OCI-LY7 (cell line): ENCODE measurements at regions of chr1 and their contacts with region 1.

Region 1: GRCh38 chr1:205255941-205256780 is 28.4 kb downstream of the TMCC2 start:
- DNase-seq: peak; percentile 74
- H3K4me3 ChIP-seq: no peak overlapping the region
- H3K27ac ChIP-seq: no peak overlapping the region
- H3K4me1 ChIP-seq: peaks cover 39% of the 10 kb centered on the region
- CTCF ChIP-seq: peak; percentile 88

Region 2: GRCh38 chr1:204975570-204976235 is 280.5 kb before region 1 on chr1:
- CTCF ChIA-PET with region 1: no interaction called
- POLR2A ChIA-PET with region 1: no interaction called
- intact Hi-C with region 1: loop called (anchors 1 kb)
- DNase-seq: peak; percentile 51
- H3K4me3 ChIP-seq: no peak overlapping the region
- H3K27ac ChIP-seq: no peak overlapping the region
- H3K4me1 ChIP-seq: no peaks in the 10 kb centered on the region
- CTCF ChIP-seq: peak; percentile 84

Region 3: DNA sequence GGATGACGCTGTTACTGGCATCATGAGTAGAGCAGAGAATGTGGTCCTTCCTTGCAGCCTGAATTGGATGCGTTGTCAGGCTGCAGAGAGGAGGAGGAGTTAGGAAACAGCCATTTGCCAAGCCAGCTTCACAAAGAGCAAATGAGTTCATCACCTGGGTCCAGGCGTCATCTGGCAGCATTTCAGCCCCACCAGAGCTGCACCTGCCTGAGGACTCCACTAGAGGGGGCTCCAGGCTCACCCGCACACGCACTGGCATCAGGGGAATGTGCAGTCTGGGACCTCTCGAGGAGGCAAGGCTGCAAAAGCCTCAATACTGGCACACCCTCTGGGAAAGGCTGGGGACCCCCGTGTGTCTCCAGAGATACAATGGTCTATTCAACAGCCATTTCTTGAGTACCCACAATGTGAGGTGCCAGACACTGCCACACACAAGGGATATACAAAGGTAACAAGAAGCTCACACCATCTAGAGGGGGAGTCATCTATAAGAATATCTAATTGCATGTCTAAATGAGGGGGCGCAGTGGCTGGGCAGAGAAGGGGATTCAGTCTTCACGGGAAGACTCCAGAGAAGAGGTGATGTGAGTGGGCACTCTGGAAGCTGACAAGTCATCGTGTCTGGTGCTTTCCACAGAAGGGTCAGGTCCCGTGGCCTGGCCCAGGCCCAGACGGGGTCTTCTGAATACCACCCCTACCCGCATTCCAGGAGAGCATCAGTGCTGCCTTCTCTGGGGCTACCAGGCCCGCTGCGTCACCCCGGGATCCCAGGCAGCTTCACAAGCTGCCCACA is 266.7 kb before region 1 on chr1:
- CTCF ChIA-PET with region 1: interaction called, 3 read pairs
- POLR2A ChIA-PET with region 1: no interaction called
- intact Hi-C with region 1: loop called (anchors 1 kb)
- DNase-seq: peak; percentile 65
- H3K4me3 ChIP-seq: no peak overlapping the region
- H3K27ac ChIP-seq: no peak overlapping the region
- H3K4me1 ChIP-seq: no peaks in the 10 kb centered on the region
- CTCF ChIP-seq: peak; percentile 91

Region 4: DNA sequence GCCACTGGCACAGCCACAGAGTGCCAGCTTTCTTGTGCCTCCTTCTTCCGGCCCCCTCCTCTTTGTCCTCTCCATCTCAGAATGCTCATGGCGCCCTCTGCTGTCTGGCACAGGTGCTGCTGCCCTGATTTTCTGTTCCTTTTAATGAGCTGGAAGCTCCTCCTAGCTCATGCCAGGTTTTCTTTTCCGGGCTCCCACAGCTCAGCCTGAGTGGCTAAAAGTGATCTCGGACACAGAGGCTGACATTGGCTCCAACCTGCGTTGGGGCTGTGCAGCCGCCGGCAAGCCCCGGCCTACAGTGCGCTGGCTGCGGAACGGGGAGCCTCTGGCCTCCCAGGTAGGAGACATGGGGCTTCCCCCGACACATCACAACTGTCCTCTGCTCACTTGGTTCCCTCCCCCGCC is 194.5 kb before region 1 on chr1:
- CTCF ChIA-PET with region 1: interaction called, 3 read pairs
- POLR2A ChIA-PET with region 1: no interaction called
- intact Hi-C with region 1: loop called (anchors 10 kb)
- DNase-seq: peak; percentile 68
- H3K4me3 ChIP-seq: no peak overlapping the region
- H3K27ac ChIP-seq: no peak overlapping the region
- H3K4me1 ChIP-seq: no peaks in the 10 kb centered on the region
- CTCF ChIP-seq: peak; percentile 92

Region 5: GRCh38 chr1:205141236-205142101 is 114.7 kb before region 1 on chr1:
- CTCF ChIA-PET with region 1: no interaction called
- POLR2A ChIA-PET with region 1: no interaction called
- intact Hi-C with region 1: loop called (anchors 1 kb)
- DNase-seq: peak; percentile 85
- H3K4me3 ChIP-seq: no peak overlapping the region
- H3K27ac ChIP-seq: no peak overlapping the region
- H3K4me1 ChIP-seq: peaks cover 4% of the 10 kb centered on the region
- CTCF ChIP-seq: peak; percentile 94

Region 6: DNA sequence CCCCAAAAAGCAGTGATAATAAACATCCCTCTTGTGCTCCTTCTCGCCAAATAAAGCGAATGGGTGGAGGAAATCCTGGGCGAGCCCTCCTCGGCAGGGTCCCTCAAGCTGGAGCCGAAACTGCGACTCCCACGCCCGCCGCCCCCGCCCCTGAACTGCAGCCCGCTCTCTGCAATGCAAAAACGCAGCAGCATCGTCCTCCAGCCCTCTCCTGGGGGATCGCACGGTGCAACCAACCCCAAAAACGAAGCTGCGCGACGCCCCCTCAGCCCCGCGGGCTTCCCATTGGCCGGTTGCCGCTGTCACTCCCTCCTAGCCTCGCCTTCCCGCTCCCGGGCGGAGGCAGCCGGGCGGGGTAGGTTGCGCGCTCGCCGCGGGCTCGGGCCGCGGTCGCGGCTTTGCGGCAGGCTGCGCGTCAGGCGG is 28.6 kb before region 1 on chr1 and contains the start of gene TMCC2:
- CTCF ChIA-PET with region 1: interaction called, 48 read pairs
- POLR2A ChIA-PET with region 1: interaction called, 9 read pairs
- intact Hi-C with region 1: loop called (anchors 1 kb)
- DNase-seq: peak; percentile 94
- H3K4me3 ChIP-seq: peak within 1 kb of the TSS; percentile 77
- H3K27ac ChIP-seq: peak within 1 kb of the TSS; percentile 17
- H3K4me1 ChIP-seq: peaks cover 28% of the 10 kb centered on the region
- CTCF ChIP-seq: no peak
- total RNA-seq, gene TMCC2: 7.0 and 7.8 TPM in 2 replicates

Region 7: DNA sequence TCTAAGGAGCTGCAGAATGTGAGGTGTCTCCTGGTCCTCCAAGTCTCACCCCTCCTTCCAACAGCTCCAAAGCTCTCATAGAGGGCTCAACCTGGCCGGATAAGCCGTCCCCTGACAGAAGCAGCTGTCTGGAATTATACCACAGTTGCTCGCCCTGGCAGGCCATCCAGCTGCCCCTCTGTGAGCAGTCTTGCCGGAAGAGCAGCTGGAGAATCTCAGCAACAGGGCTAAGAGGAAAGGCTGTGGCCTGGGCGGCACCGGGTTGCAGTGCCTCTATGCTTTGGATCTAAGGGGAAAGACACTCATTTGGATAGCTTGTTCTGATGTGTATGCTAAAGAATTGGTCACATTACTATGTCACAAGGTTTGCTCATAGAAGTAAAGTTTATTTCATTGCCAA is 16.0 kb before region 1 on chr1:
- CTCF ChIA-PET with region 1: interaction called, 3 read pairs
- POLR2A ChIA-PET with region 1: interaction called, 10 read pairs
- intact Hi-C with region 1: no loop called
- DNase-seq: no peak
- H3K4me3 ChIP-seq: no peak overlapping the region
- H3K27ac ChIP-seq: no peak overlapping the region
- H3K4me1 ChIP-seq: peaks cover 6% of the 10 kb centered on the region
- CTCF ChIP-seq: no peak

Region 8: GRCh38 chr1:205421798-205422197 is 165.6 kb after region 1 on chr1 and contains the start of gene LEMD1:
- CTCF ChIA-PET with region 1: no interaction called
- POLR2A ChIA-PET with region 1: no interaction called
- intact Hi-C with region 1: no loop called
- DNase-seq: no peak
- H3K4me3 ChIP-seq: no peak within 1 kb of the TSS
- H3K27ac ChIP-seq: no peak within 1 kb of the TSS
- H3K4me1 ChIP-seq: peaks cover 25% of the 10 kb centered on the region
- CTCF ChIP-seq: no peak
- total RNA-seq, gene LEMD1: 0.44 and 0.57 TPM in 2 replicates